OCI-LY7 (cell line): ENCODE measurements at regions of chr16 and their contacts with region 1.

Region 1: DNA sequence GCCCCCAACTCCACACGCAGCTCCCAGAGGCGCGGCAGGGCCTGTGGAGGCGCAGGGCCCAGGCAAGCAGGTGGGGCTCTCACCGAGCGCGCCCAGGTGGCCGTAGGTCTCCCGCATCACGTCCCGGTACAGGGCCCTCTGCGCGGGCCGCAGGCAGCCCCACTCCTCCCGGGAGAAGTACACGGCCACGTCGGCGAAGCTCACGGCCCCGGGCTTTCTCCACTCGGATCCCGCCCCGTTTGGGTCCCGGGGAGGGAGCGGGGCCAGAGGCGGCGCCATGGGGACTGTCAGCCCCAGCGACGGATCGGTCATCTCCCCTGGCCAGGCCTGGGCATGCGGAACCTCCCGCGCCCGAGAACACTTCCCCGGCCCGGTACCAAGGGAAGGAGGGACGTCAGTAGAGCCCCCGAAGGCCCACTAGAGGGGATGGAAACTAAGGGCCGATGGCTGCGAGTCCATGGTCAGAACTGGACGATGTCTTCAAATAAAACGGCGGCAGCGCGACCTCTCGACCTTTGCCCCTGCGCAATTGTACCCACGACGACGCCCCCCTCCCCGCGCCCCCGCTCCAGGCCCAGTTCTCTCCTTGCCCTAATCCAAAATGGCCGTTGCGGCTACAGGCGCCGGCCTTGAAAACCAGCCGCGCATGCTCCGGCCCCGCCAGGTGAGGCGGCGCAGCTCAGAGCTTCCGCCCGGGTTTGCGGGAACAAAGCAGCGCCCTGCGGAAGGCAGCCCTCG is at the start of gene ZNF747:
- DNase-seq: peak; percentile 94
- H3K4me3 ChIP-seq: peak within 1 kb of the TSS; percentile 75
- H3K27ac ChIP-seq: peak within 1 kb of the TSS; percentile 82
- H3K4me1 ChIP-seq: peaks cover 34% of the 10 kb centered on the region
- CTCF ChIP-seq: no peak
- total RNA-seq, gene ZNF747: 15.7 and 22.2 TPM in 2 replicates

Region 2: DNA sequence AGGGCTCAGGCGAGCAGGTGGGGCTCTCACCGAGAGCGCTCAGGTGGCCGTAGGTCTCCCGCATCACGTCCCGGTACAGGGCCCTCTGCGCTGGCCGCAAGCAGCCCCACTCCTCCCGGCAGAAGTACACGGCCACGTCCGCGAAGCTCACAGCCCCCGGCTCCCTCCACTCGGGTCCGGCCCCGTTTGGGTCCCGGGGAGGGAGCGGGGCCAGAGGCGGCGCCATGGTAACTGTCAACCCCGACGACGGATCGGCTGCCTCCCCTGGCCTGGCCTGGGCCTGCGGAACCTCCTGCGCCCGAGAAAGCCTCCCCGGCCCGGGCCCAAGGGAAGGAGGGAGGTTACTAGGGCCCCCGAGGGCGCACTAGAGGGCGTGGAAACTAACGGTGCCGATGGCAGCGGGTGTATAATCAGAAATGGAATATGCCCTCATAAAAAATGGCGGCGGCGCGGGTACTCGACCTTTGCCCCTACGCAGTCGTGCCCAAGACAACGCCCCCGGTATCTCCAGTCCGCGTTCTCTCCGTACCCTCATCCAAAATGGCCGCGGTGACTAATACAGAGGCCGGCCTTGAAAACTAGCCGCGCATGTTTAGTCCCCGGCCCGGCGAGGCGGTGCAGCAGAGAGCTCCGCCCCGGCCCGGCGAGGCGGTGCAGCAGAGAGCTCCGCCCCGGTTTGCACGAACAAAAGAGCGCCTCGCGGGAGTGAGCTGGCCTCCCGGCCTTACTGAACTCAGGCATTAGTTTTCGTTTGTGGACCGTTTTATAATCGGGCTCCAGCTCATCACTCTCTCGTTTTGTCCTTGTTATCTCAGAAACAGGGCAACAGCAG is 23.6 kb after region 1 on chr16 and contains the start of gene ZNF764:
- CTCF ChIA-PET with region 1: interaction called, 6 read pairs
- POLR2A ChIA-PET with region 1: interaction called, 54 read pairs
- intact Hi-C with region 1: loop called (anchors 1 kb)
- DNase-seq: peak; percentile 98
- H3K4me3 ChIP-seq: peak within 1 kb of the TSS; percentile 77
- H3K27ac ChIP-seq: peak within 1 kb of the TSS; percentile 77
- H3K4me1 ChIP-seq: peaks cover 11% of the 10 kb centered on the region
- CTCF ChIP-seq: peak; percentile 50
- total RNA-seq, gene ZNF764: 10.5 and 14.6 TPM in 2 replicates

Region 3: GRCh38 chr16:30628627-30629540 is 94.3 kb after region 1 on chr16:
- CTCF ChIA-PET with region 1: interaction called, 5 read pairs
- POLR2A ChIA-PET with region 1: no interaction called
- intact Hi-C with region 1: loop called (anchors 1 kb)
- DNase-seq: peak; percentile 84
- H3K4me3 ChIP-seq: no peak overlapping the region
- H3K27ac ChIP-seq: no peak overlapping the region
- H3K4me1 ChIP-seq: peaks cover 15% of the 10 kb centered on the region
- CTCF ChIP-seq: peak; percentile 97

Region 4: GRCh38 chr16:30724641-30725417 is 190.3 kb after region 1 on chr16:
- CTCF ChIA-PET with region 1: no interaction called
- POLR2A ChIA-PET with region 1: no interaction called
- intact Hi-C with region 1: no loop called
- DNase-seq: no peak
- H3K4me3 ChIP-seq: no peak overlapping the region
- H3K27ac ChIP-seq: no peak overlapping the region
- H3K4me1 ChIP-seq: no peaks in the 10 kb centered on the region
- CTCF ChIP-seq: no peak

Region 5: GRCh38 chr16:30948667-30949649 is 414.4 kb after region 1 on chr16 and contains the start of gene ORAI3:
- CTCF ChIA-PET with region 1: interaction called, 19 read pairs
- POLR2A ChIA-PET with region 1: no interaction called
- intact Hi-C with region 1: no loop called
- DNase-seq: peak; percentile 66
- H3K4me3 ChIP-seq: peak within 1 kb of the TSS; percentile 72
- H3K27ac ChIP-seq: peak within 1 kb of the TSS; percentile 38
- H3K4me1 ChIP-seq: peaks cover 31% of the 10 kb centered on the region
- CTCF ChIP-seq: no peak
- total RNA-seq, gene ORAI3: 5.7 and 7.8 TPM in 2 replicates